ENCODE measurements at regions of chr2 and their contacts with region 1.

Region 1: DNA sequence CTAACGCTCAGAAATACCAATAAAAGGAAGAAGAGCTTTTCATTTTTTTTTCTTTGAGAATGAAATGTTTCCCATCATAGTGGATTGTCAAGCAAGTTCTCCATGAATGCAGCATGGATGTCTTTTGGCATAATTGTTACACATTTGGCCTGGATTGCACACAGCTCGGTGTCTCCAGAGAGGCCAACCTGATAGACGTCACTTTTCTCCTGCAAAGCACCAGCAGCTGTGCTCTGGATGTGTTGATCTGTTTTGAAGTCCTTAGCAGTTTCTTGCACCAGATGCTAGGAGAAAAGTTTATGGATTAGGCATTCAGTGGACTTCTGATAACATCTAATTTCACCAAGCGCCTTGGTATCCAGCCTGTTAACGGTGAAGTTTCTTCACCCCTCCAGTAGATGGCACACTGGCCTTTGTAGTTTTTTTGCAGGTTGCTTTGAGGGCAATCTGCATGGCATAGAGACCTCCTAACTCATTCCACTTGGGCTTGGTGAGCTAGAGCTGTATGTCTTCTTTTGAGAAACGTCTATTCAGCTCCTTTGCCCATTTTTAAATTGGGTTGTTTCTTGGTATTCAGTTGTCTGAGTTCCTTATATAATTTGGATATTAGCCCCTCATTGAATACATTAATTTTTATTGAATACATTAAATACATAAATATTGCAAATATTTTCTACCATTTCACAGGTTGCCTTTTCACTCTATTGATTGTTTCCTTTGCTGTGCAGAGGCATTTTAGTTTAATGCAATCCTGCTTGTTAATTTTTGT is 59.7 kb downstream of the PTH2R start:
- DNase-seq: peak in 1 of 5 donors; percentile 7
- ATAC-seq: no peak
- H3K4me3 ChIP-seq: no peak overlapping the region
- H3K27ac ChIP-seq: no peak overlapping the region
- H3K4me1 ChIP-seq: peaks cover 0 to 3% (median 0%) of the 10 kb centered on the region in 12 donors
- H3K27me3 ChIP-seq: no peaks in the 10 kb centered on the region
- CTCF ChIP-seq: peak; percentile 18 to 67 (median 44)
- POLR2A ChIP-seq: no peak

Region 2: DNA sequence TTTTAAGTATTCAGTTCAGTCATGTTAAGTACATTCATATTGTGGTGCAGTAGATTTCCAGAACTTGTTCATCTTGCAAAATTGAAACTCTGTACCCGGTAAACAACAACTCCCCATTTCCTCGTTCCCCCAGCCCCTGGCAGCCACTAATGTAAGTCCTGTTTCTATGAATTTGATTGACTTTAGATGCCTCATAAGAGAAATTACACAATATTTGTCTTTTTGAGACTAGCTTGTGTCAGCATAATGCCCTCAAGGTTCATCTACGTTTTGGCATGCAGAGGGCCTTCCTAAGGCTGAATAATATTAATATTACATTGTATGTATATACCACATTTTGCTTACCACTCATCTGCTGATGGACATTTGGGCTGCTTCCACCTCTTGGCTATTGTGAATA is 872.1 kb before region 1 on chr2:
- intact Hi-C with region 1: no loop called
- DNase-seq: no peak
- ATAC-seq: no peak
- H3K4me3 ChIP-seq: no peak overlapping the region
- H3K27ac ChIP-seq: no peak overlapping the region
- H3K4me1 ChIP-seq: no peaks in the 10 kb centered on the region
- H3K27me3 ChIP-seq: no peaks in the 10 kb centered on the region
- CTCF ChIP-seq: no peak
- POLR2A ChIP-seq: no peak

Region 3: GRCh38 chr2:208945719-208946256 is 479.5 kb after region 1 on chr2:
- intact Hi-C with region 1: no loop called
- DNase-seq: no peak
- ATAC-seq: no peak
- H3K4me3 ChIP-seq: no peak overlapping the region
- H3K27ac ChIP-seq: no peak overlapping the region
- H3K4me1 ChIP-seq: no peaks in the 10 kb centered on the region
- H3K27me3 ChIP-seq: no peaks in the 10 kb centered on the region
- CTCF ChIP-seq: no peak
- POLR2A ChIP-seq: no peak

Region 4: GRCh38 chr2:209208211-209208610 is 741.9 kb after region 1 on chr2:
- intact Hi-C with region 1: loop called in 3 of 10 experiments (anchors 5 to 10 kb)
- DNase-seq: no peak
- ATAC-seq: no peak
- H3K4me3 ChIP-seq: peak overlapping the region in 3 of 12 donors; percentile 27 to 31 (median 30)
- H3K27ac ChIP-seq: no peak overlapping the region
- H3K4me1 ChIP-seq: no peaks in the 10 kb centered on the region
- H3K27me3 ChIP-seq: no peaks in the 10 kb centered on the region
- CTCF ChIP-seq: peak in 9 of 12 donors; percentile 32 to 60 (median 50)
- POLR2A ChIP-seq: no peak